Posterior cingulate gyrus (tissue), 11 donors: ENCODE measurements at regions of chr2 and their contacts with region 1.

Region 1: DNA sequence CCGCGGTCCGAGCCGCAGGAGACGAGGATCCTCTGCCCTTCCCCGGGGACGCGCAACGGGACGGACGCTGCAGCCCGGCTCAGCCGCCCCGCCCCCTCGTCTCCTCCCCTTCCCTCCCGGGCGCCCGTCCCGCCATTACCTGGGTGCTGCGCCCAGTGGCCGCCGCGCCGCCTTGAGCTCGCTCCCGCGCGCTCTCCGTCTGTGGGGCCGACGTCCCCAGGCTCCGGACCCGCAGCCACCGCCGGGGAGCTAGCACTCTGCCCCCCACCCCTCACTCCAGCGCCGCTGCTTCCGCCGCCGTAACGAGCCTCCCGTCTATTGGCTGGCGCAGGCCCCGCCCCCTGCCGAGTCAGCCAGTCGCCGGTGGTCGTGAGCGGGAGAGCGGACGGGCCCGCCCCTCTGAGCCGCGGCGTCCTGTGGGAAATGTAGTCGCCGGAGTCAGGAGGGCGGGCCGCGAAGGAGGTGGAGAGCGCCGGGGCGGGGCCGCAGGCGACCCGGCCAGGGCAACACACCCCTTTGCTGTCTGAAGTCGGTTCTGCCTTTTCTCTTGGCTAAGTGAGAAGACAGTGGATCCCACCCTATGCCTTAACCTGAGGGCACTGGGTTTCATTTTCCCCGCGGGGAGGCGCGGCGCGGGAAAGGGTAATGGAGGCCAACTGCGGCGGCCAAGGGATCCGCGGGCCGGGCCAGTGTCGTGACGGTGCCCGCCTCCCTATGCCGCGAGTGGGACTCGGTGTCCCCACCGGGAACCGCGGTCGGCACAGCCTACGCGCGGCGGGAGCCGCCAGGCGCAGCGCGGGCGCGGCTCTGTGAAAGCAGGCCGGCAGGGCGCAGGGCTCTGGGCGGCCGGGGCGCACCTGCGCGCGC is at the start of gene SAP130:
- DNase-seq: peak; percentile 98 to 100 (median 99)

Region 2: DNA sequence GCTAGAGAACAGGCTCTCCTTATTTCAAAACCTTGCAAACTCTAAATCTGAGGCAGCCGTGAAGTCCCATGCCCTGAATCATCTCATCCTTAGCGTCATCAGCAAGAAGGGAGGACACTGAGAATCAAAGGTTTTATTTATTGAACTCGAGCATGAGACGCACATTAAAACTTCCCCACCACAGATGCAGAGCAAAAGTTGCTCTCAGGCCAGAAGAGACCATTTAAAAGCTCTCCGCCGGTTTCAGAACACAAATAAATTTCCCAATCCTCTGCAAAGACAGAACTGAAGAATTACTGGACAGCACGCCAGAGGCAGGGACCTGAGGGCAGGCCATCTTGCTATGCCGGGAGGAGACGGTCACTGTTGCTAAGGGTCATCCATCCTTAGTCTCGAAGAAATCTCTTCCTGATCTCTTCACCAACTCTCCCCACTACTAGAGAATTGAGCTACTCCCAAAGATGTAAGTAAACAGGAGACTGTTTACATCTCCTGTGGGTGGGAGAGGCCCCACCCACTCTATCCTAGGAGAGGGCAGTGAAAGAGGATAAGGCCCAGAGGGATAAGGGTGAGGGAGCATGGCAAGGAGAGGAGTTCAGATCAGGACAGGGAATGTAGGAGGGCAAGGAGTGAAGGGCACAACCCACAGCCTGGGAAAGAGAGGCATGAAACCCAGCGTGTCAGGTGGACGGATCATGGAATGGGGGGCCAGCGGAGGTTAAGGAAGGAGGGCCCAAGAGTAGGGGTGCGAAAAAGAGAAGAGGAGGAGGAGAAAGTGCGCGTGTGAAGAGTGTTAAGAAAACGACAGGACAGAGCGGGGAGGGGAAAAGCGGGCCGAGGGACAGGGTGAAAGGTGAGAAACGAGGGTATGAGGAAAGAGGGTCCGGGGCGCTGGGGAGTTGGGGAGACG is 143.3 kb before region 1 on chr2:
- intact Hi-C with region 1: loop called (anchors 10 kb)
- DNase-seq: peak in 1 of 10 donors; percentile 43